Activated CD4-positive, alpha-beta T cell treated with anti-CD3 and anti-CD28 coated beads for 36 hours (primary cell): ENCODE measurements at regions of chrX and their contacts with region 1.

Region 1: DNA sequence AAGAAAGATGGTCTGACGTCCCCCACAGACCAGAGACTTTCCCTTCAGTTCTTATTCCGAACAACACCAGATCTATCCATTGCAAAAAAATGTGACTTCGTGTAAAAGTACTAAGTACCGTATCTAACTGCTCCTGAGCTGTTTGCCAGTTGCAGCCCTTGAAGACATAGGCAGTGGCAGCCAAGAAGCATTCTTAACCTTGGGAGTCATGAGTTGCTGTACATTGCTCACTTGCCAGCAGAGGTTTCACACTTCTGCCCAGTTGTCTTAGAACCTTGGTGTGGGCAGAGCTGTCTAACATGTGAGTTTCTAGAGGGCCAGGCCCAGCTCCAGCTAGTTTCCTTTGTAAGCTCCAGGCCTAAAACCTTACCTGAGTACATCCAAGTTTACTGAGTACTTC is 10.5 kb upstream of the CHRDL1 start:
- DNase-seq: no peak
- ATAC-seq: no peak
- H3K4me3 Mint-ChIP-seq: no peak overlapping the region
- H3K27ac Mint-ChIP-seq: no peak overlapping the region
- H3K4me1 Mint-ChIP-seq: no peaks in the 10 kb centered on the region
- H3K27me3 Mint-ChIP-seq: no peaks in the 10 kb centered on the region

Region 2: DNA sequence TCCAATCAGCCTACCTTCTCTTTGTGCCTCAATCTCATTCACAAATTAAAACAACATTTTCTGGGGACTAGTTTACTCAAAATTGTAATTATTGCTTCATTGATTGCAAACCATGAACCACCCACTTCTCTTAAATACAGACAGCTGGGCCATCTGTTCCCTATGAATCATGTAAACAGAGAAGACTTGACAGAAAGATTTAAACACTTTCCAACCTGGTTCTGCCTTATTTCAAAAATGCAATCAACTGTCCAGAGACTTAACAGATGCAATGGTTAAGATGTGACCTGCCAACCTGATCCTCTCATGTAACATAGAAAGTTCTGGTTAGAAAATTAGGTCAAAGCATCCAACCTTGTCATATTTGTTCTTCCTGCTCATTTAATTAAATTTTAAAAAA is 684.5 kb after region 1 on chrX:
- CTCF ChIA-PET with region 1: no interaction called
- POLR2A ChIA-PET with region 1: interaction called, 12 read pairs
- intact Hi-C with region 1: no loop called
- DNase-seq: no peak
- ATAC-seq: no peak
- H3K4me3 Mint-ChIP-seq: no peak overlapping the region
- H3K27ac Mint-ChIP-seq: no peak overlapping the region
- H3K4me1 Mint-ChIP-seq: no peaks in the 10 kb centered on the region
- H3K27me3 Mint-ChIP-seq: peaks cover 3% of the 10 kb centered on the region